Activated CD8-positive, alpha-beta T cell treated with anti-CD3 and anti-CD28 coated beads for 36 hours (primary cell): ENCODE measurements at regions of chr2 and their contacts with region 1.

Region 1: DNA sequence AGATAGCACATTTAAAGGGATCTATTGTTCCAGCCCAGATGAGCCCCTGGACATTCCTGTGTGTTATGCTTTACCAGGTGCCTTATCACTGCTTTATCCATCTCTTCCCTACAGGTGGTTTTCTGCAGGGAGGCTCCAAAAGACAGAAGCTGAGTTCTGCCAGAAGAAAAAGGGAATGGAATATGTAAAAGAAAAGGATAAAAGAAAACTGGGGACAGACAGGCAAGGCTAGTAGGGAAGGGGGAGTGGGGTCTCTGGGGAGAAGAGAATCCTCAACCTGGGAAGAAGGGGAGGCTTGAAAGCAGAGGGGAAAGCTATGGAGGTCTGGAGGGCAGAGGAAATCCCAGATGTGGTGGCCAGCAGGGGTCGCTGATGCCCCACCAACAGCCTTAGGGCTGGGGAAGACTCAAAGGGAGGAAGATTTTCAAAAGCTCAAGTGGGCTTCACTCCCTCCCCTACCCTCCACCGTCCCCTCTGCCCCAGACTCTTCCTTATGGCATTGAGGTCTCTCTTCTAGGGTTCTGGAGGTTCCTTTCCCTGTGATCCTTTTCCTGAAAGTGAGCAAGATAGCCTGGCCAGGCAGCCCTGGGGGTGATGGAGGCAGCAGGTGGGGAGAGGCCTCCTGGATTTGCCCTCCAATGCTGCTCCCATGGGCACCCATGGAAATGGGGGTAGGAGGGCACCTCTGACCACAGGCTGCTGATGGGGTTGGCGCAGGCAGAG is 178.1 kb upstream of the PKDCC start:
- DNase-seq: peak; percentile 80
- ATAC-seq: peak; percentile 92
- H3K4me3 Mint-ChIP-seq: no peak overlapping the region
- H3K27ac Mint-ChIP-seq: no peak overlapping the region
- H3K4me1 Mint-ChIP-seq: peaks cover 9% of the 10 kb centered on the region
- H3K27me3 Mint-ChIP-seq: no peaks in the 10 kb centered on the region
- CTCF ChIP-seq: peak; percentile 78

Region 2: DNA sequence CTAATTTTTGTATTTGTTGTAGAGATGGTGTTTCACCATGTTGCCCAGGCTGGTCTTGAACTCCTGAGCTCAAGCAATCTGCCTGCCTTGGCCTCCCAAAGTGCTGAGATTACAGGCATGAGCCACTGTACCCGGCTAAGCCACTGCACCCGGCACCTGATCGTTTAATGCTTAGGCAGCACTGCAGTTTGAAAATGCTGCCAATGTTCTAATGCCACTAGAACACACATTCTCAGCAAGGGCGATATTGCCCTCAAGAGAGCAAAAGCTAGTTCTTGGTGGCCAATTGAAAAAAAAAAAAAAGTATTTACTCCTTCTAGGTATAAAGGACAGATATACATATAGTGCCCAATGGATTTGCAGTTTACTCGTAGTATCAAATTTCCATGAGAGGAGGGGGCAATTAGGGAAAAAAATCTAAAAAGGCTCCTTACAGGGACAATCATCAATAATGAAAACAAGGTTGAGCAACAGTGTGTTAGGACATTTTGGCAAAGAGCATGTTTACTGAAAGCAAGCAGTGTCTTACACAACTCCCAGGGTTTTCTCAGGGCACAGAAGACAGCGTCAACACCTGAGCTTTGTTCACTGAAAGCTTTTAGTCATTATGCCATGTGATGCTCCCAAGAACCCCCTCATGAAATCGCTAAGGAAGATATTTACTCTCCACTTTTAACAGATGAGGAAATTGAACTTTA is 21.8 kb before region 1 on chr2:
- CTCF ChIA-PET with region 1: interaction called, 73 read pairs
- POLR2A ChIA-PET with region 1: no interaction called
- intact Hi-C with region 1: no loop called
- DNase-seq: no peak
- ATAC-seq: no peak
- H3K4me3 Mint-ChIP-seq: no peak overlapping the region
- H3K27ac Mint-ChIP-seq: no peak overlapping the region
- H3K4me1 Mint-ChIP-seq: no peaks in the 10 kb centered on the region
- H3K27me3 Mint-ChIP-seq: peaks cover 13% of the 10 kb centered on the region
- CTCF ChIP-seq: no peak

Region 3: GRCh38 chr2:41853427-41854216 is 16.1 kb before region 1 on chr2:
- CTCF ChIA-PET with region 1: interaction called, 73 read pairs
- POLR2A ChIA-PET with region 1: no interaction called
- intact Hi-C with region 1: no loop called
- DNase-seq: peak; percentile 9
- ATAC-seq: peak; percentile 20
- H3K4me3 Mint-ChIP-seq: no peak overlapping the region
- H3K27ac Mint-ChIP-seq: no peak overlapping the region
- H3K4me1 Mint-ChIP-seq: peaks cover 4% of the 10 kb centered on the region
- H3K27me3 Mint-ChIP-seq: peaks cover 4% of the 10 kb centered on the region
- CTCF ChIP-seq: peak; percentile 75

Region 4: DNA sequence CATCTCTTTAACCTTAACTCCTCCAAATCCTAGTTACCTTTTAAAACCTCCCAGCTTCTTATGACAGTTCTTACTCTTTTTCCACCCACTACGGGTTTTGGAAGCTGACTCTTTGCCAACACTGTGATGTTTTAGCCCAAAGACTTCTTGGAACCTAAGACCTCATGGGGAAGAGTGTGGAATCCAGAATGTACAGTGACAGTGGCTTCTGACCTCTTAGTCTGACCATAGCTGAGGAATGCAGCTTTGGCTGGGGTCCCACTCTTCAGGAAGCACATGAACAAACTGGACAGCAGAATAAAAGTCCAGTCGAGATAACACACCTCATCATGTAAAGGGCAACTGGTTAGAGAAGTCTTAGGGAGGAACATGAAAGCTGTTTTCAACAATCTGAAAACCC is 17.1 kb after region 1 on chr2:
- CTCF ChIA-PET with region 1: interaction called, 17 read pairs
- POLR2A ChIA-PET with region 1: interaction called, 3 read pairs
- intact Hi-C with region 1: no loop called
- DNase-seq: no peak
- ATAC-seq: no peak
- H3K4me3 Mint-ChIP-seq: no peak overlapping the region
- H3K27ac Mint-ChIP-seq: no peak overlapping the region
- H3K4me1 Mint-ChIP-seq: no peaks in the 10 kb centered on the region
- H3K27me3 Mint-ChIP-seq: peaks cover 4% of the 10 kb centered on the region
- CTCF ChIP-seq: no peak

Region 5: GRCh38 chr2:41896186-41896846 is 26.6 kb after region 1 on chr2:
- CTCF ChIA-PET with region 1: interaction called, 15 read pairs
- POLR2A ChIA-PET with region 1: interaction called, 3 read pairs
- intact Hi-C with region 1: no loop called
- DNase-seq: peak; percentile 52
- ATAC-seq: peak; percentile 87
- H3K4me3 Mint-ChIP-seq: no peak overlapping the region
- H3K27ac Mint-ChIP-seq: no peak overlapping the region
- H3K4me1 Mint-ChIP-seq: peaks cover 16% of the 10 kb centered on the region
- H3K27me3 Mint-ChIP-seq: no peaks in the 10 kb centered on the region
- CTCF ChIP-seq: no peak

Region 6: DNA sequence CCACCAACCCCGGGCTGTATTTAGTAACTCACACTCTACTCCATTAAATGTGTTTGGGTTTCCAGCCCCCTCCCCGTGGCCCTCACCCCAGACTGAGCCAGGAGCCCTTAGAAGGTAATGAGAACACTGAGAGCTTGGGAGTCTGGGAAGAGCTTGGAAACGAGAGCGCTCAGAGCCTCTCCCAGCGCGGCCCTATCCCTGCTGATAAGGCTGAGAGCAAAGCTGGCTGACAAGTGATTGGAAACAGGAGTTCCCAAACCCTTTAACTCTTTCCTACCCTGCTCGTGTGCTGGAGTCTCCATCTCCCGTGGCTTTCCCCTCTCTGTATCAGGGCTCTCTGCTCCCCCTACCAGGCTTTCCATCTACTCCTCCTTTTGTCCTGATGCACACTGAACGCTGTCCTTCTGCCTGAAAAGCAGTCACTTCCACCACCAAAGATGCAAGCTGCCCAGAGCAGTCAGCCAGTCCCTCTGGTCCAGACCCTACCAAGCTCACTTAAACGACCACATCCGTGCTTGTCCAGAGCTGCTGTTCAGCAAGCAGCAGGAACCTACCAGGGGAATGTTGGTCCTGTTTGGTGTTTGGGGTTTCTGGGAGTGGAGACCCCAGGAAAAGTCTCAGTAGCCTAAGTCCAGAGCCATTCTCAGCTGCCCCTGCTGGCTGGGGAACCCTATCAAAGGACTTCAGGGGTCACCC is 78.1 kb after region 1 on chr2:
- CTCF ChIA-PET with region 1: no interaction called
- POLR2A ChIA-PET with region 1: no interaction called
- intact Hi-C with region 1: no loop called
- DNase-seq: no peak
- ATAC-seq: no peak
- H3K4me3 Mint-ChIP-seq: no peak overlapping the region
- H3K27ac Mint-ChIP-seq: no peak overlapping the region
- H3K4me1 Mint-ChIP-seq: no peaks in the 10 kb centered on the region
- H3K27me3 Mint-ChIP-seq: peaks cover 5% of the 10 kb centered on the region
- CTCF ChIP-seq: no peak